ENCODE measurements at regions of chr4 and their contacts with region 1.

Region 1: GRCh38 chr4:113761620-113762185 is at the start of gene CAMK2D:
- DNase-seq: peak; percentile 67 to 94 (median 86)
- H3K4me3 ChIP-seq: peak within 1 kb of the TSS; percentile 53 to 95 (median 85)
- H3K27ac ChIP-seq: peak within 1 kb of the TSS; percentile 86 to 100 (median 99)
- H3K27me3 ChIP-seq: no peaks in the 10 kb centered on the region
- CTCF ChIP-seq: peak in 54 of 56 donors; percentile 31 to 80 (median 65)
- total RNA-seq, gene CAMK2D: 46.8 to 134 (median 89.2) TPM

Region 2: GRCh38 chr4:113547487-113548042 is 214.1 kb before region 1 on chr4:
- intact Hi-C with region 1: loop called (anchors 1 to 2 kb)
- DNase-seq: peak; percentile 64 to 88 (median 78)
- H3K4me3 ChIP-seq: peak overlapping the region in 3 of 59 donors; percentile 5 to 8 (median 7)
- H3K27ac ChIP-seq: peak overlapping the region in 17 of 59 donors; percentile 9 to 74 (median 28)
- H3K27me3 ChIP-seq: no peaks in the 10 kb centered on the region
- CTCF ChIP-seq: peak; percentile 86 to 99 (median 97)

Region 3: DNA sequence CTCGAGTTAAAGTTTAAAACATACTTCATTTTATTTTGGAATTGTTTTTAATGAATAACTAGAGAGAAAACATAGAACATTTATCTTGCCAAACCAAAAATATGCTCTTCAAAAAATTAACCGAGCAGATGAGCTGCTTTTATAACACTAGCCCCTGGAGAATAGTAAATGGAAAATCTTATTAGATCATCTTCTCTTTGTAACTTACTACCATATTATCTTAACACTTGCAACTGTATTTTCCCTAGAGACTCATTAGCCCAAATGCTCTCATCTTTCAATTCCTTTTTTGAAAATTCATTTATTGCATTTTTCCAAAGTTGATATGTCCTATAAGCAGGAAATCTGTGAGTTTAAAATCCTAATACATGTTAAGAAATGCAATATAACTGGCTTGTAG is 143.5 kb before region 1 on chr4:
- intact Hi-C with region 1: loop called in 1 of 2 experiments (anchors 5 kb)
- DNase-seq: no peak
- H3K4me3 ChIP-seq: no peak overlapping the region
- H3K27ac ChIP-seq: peak overlapping the region in 2 of 59 donors; percentile 22 to 23
- H3K27me3 ChIP-seq: no peaks in the 10 kb centered on the region
- CTCF ChIP-seq: no peak

Measured in dorsolateral prefrontal cortex (tissue), 120 donors.